ENCODE measurements at regions of chr1 and their contacts with region 1.

Region 1: DNA sequence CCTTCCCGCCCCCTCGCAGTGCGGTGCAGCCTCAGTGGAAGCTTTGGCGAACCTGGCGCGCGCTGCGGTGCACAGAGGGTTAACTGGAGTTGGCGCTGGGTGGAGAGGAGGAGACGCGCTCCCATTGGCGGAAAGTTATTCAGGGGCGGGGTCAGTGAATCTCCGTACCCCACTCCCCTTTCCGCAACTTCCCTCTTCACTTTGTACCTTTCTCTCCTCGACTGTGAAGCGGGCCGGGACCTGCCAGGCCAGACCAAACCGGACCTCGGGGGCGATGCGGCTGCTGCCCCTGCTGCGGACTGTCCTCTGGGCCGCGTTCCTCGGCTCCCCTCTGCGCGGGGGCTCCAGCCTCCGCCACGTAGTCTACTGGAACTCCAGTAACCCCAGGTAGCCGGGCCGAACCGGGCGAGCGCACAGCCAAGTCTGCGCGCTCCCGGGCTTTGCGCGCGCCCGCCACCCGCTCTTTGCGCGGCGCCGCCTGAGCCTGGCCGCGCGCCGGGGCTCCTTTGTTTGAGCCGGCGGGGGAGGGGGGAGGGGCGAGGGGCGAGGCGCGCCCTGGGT is at the start of gene EFNA4:
- DNase-seq: peak; percentile 92
- ATAC-seq: peak; percentile 87
- H3K4me3 Mint-ChIP-seq: peak within 1 kb of the TSS; percentile 83
- H3K27ac Mint-ChIP-seq: peak within 1 kb of the TSS; percentile 72
- H3K4me1 Mint-ChIP-seq: peaks cover 31% of the 10 kb centered on the region
- H3K27me3 Mint-ChIP-seq: no peaks in the 10 kb centered on the region
- total RNA-seq, gene EFNA4: 6.3 to 6.5 TPM

Region 2: DNA sequence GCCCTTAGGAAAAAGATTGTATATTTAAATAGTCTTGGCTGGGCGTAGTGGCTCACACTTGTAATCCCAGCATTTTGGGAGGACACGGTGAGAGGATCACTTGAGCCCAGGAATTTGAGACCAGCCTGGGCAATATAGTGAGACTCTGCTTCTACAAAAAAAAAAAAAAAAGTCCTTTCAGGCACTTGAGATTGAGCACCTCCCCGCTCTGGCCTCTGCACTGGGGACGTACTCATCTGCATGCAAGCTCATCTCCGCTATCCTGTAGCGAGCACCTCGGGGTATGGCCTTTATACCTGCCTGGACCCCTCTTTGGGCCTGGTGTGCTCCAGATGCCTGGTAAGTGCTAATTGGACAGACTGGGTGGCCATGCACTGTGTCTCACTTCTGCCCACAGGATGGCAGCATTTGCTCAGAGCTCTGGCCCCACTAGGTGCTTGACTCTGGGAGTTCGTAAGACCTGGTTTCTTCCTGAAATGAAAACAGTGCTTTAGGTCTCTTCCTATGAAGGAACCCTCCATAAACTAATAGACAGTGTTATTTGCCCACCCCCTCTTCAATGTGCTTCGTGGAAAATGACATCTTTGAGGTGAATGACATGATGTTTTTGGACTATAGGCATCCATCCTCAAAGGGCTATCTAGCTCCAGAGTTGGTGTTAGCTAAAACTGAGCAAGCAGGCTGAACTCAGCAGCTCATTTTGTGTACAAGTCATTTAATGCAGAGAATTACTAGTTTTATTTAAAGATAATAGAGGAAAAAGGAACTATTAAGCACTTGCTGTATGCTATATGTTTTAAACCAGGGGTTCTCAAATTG is 394.0 kb before region 1 on chr1:
- CTCF ChIA-PET with region 1: interaction called, 3 read pairs
- POLR2A ChIA-PET with region 1: no interaction called
- intact Hi-C with region 1: loop called in 1 of 2 experiments (anchors 1 kb)
- DNase-seq: peak; percentile 88
- ATAC-seq: peak; percentile 100
- H3K4me3 Mint-ChIP-seq: no peak overlapping the region
- H3K27ac Mint-ChIP-seq: no peak overlapping the region
- H3K4me1 Mint-ChIP-seq: peaks cover 17% of the 10 kb centered on the region
- H3K27me3 Mint-ChIP-seq: peaks cover 2% of the 10 kb centered on the region

Region 3: DNA sequence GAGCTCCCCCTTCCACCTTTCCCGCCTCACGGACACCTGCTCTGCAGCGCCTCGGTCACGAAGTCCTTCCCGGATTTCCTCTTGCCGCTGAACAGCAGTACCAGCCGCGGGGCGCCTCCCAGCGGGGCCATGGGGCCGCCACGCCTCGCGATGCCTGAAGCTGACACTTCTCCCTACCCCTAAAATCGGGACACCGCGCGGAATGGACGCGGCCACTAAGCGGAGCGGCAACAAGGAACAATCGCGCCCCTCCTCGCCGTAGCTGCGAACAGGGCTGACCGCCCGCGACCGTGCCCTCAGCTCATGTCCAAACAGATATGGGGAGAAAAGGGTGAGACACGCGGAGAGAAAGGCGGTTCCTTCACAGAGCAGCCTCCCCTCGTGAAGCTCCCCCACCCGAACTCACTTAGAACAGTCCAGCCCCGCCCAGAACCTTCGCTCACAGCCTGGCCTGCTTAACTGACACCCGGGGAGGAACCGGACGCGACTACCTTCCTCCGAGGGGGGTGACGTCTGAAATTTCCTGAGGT is 127.0 kb before region 1 on chr1 and contains the start of gene PMVK:
- CTCF ChIA-PET with region 1: interaction called, 6 read pairs
- POLR2A ChIA-PET with region 1: no interaction called
- intact Hi-C with region 1: loop called in 1 of 2 experiments (anchors 1 kb)
- DNase-seq: peak; percentile 97
- ATAC-seq: peak; percentile 80
- H3K4me3 Mint-ChIP-seq: peak within 1 kb of the TSS; percentile 95
- H3K27ac Mint-ChIP-seq: peak within 1 kb of the TSS; percentile 96
- H3K4me1 Mint-ChIP-seq: peaks cover 54% of the 10 kb centered on the region
- H3K27me3 Mint-ChIP-seq: no peaks in the 10 kb centered on the region
- total RNA-seq, gene PMVK: 17.0 to 36.9 TPM

Region 4: DNA sequence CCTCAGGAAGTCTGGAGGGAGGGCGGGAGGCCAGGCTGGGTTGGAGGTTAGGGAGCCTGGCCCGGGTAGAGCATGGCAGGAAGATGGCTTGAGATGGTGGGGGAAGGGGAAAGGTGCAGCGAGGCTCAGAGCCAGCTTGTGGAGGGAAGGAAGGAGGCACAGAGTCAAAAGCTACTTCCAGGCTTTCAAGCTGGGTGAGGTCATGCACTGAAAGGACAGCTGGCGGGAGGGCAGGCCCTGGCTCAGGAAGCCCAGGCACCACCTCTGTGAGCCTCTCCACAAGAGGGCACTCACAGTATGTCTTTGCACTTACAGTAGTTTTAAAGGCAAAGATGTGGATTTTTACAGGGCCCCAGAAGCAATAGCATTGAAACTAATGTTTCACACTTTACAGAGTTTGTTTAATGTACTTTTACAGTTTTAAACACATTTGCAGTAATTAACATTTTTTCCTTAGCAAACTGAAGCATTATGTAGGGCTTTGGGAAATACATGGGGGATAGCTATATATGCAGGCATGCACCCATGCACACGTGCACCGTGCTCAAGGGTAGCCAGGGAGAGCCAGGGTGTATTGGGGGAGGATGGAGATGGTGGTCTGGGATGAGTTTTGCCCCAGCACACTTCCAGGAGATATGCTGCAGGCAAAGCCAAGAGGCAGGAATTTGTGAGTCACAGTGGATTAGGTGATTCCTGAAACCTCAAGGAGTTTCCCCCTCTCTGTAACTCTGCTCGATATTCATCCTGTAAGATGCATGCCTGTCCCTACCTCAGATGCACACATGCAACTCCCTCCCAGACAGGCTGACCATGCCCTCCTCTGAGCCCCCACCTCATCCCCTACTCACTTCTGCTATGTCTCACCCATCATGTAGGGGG is 18.6 kb before region 1 on chr1:
- CTCF ChIA-PET with region 1: interaction called, 67 read pairs
- POLR2A ChIA-PET with region 1: interaction called, 3 read pairs
- intact Hi-C with region 1: loop called (anchors 1 kb)
- DNase-seq: peak; percentile 81
- ATAC-seq: peak; percentile 98
- H3K4me3 Mint-ChIP-seq: no peak overlapping the region
- H3K27ac Mint-ChIP-seq: no peak overlapping the region
- H3K4me1 Mint-ChIP-seq: peaks cover 16% of the 10 kb centered on the region
- H3K27me3 Mint-ChIP-seq: no peaks in the 10 kb centered on the region

Region 5: DNA sequence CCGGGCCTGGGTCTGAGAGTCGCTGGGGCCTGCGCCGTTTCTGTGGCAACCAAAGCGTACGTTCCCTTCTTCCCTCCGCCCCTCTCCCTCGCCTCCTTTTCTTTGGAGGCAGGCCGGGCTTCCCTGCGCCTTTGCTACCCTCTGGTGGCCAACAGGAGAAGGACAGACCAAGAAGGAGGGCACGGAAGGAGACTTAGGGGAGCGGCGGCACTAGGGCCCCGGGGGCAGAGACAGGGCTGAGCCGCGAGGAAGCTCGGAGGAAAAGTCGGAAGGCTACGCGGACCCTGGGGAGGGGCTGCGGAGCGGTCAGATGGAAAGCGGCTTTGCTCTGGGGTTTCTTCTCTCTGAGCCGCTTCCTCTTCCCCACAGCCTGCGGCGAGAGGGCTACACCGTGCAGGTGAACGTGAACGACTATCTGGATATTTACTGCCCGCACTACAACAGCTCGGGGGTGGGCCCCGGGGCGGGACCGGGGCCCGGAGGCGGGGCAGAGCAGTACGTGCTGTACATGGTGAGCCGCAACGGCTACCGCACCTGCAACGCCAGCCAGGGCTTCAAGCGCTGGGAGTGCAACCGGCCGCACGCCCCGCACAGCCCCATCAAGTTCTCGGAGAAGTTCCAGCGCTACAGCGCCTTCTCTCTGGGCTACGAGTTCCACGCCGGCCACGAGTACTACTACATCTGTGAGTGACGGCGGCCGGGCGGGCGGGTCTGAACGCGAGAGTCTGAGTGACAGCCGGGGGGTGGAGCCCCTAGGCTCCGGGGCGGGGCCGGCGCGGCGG is 21.3 kb after region 1 on chr1:
- CTCF ChIA-PET with region 1: interaction called, 81 read pairs
- POLR2A ChIA-PET with region 1: interaction called, 3 read pairs
- intact Hi-C with region 1: loop called (anchors 1 kb)
- DNase-seq: peak; percentile 97
- ATAC-seq: peak; percentile 78
- H3K4me3 Mint-ChIP-seq: peak overlapping the region; percentile 82
- H3K27ac Mint-ChIP-seq: peak overlapping the region; percentile 91
- H3K4me1 Mint-ChIP-seq: peaks cover 36% of the 10 kb centered on the region
- H3K27me3 Mint-ChIP-seq: peaks cover 27% of the 10 kb centered on the region

Region 6: DNA sequence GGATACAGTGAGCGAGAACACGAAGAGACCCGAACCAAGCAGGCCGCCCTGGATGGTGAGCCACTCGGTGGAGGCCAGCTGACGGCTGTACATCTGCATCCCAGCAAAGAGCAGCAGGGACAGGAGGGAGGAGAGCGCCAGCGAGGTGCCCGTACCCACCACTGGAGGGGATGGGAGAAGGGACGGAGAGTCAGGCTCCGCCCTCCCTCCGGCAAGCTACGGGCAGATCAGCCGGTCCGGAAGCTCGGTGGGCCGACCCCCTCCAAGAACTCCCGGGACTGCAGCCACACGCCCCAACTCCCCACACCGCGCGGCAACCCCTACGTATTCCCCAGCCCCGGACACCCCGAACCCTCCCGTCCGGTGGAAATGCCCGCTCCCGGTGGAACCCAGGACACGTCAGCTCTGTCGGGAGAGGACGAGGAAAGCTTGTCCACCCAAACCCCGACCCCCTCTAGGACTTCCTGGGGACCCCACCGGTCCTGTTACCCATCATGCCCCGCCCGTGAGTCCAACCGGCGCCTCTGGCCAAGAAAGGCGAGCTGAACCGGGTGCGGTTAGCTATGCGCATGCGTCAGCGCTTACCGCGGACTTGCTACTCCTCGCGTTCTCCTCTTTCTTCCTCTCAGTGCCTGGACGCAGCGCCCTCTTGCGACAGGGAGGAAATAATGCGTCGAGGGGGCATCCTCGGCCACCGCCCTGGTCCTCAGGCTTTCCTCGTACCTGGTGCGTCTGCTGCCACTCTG is 109.3 kb after region 1 on chr1 and contains the start of gene KRTCAP2:
- CTCF ChIA-PET with region 1: interaction called, 8 read pairs
- POLR2A ChIA-PET with region 1: no interaction called
- intact Hi-C with region 1: loop called in 1 of 2 experiments (anchors 1 kb)
- DNase-seq: peak; percentile 97
- ATAC-seq: peak; percentile 83
- H3K4me3 Mint-ChIP-seq: peak within 1 kb of the TSS; percentile 98
- H3K27ac Mint-ChIP-seq: peak within 1 kb of the TSS; percentile 96
- H3K4me1 Mint-ChIP-seq: peaks cover 52% of the 10 kb centered on the region
- H3K27me3 Mint-ChIP-seq: no peaks in the 10 kb centered on the region
- total RNA-seq, gene KRTCAP2: 125 to 300 TPM

Region 7: GRCh38 chr1:155389826-155390225 is 326.2 kb after region 1 on chr1:
- CTCF ChIA-PET with region 1: no interaction called
- POLR2A ChIA-PET with region 1: no interaction called
- intact Hi-C with region 1: no loop called
- DNase-seq: no peak
- ATAC-seq: no peak
- H3K4me3 Mint-ChIP-seq: no peak overlapping the region
- H3K27ac Mint-ChIP-seq: no peak overlapping the region
- H3K4me1 Mint-ChIP-seq: no peaks in the 10 kb centered on the region
- H3K27me3 Mint-ChIP-seq: no peaks in the 10 kb centered on the region

Measured in activated CD4-positive, alpha-beta T cell treated with anti-CD3 and anti-CD28 coated beads for 36 hours (primary cell).